Colonic mucosa (tissue), 4 donors: ENCODE measurements at regions of chr4 and their contacts with region 1.

Region 1: GRCh38 chr4:38189445-38189844 is 229.2 kb downstream of the PTTG2 start:
- DNase-seq: no peak
- H3K4me3 ChIP-seq: no peak overlapping the region
- H3K27ac ChIP-seq: peak overlapping the region; percentile 69
- H3K4me1 ChIP-seq: no peaks in the 10 kb centered on the region
- H3K27me3 ChIP-seq: no peaks in the 10 kb centered on the region
- CTCF ChIP-seq: no peak

Region 2: DNA sequence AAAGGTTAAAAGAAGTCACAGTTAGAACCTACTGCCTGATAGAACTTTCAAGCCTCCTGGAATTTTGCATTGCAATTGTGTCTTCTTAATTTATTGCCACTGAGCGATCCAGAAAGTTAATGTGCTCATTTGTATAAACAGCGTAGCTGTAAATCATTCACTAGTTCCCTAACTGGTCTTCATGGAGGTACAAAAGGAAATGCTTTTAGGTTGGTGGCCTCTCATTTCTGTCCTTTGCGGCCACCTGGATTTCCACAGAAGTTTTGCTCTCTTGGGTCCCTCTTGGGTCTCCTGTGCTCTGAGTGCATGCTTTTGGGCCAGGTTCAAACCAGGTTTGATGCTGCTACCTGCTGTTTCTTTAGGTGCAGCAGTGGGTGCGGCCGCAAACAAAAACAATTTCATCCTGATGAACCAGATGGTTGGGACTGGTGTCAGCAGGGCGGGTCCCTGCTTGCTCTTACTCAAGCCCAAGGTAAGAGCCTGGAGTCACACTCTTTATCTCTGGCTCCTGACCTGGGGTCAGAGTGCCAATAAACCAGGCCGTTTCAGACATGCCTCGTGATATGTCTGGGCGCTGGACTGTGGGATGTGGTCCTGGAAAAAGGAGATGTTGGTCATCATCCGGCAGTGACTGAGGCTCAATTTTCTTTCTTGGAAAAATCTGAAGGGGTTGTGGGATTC is 40.8 kb after region 1 on chr4:
- intact Hi-C with region 1: no loop called
- DNase-seq: peak; percentile 87
- H3K4me3 ChIP-seq: no peak overlapping the region
- H3K27ac ChIP-seq: peak overlapping the region; percentile 90
- H3K4me1 ChIP-seq: peaks cover 4% of the 10 kb centered on the region
- H3K27me3 ChIP-seq: no peaks in the 10 kb centered on the region
- CTCF ChIP-seq: no peak

Region 3: GRCh38 chr4:38310446-38311043 is 121.1 kb after region 1 on chr4:
- intact Hi-C with region 1: loop called (anchors 5 kb)
- DNase-seq: no peak
- H3K4me3 ChIP-seq: no peak overlapping the region
- H3K27ac ChIP-seq: no peak overlapping the region
- H3K4me1 ChIP-seq: no peaks in the 10 kb centered on the region
- H3K27me3 ChIP-seq: no peaks in the 10 kb centered on the region
- CTCF ChIP-seq: no peak